CD8-positive, alpha-beta T cell (primary cell): ENCODE measurements at regions of chr1 and their contacts with region 1.

Region 1: DNA sequence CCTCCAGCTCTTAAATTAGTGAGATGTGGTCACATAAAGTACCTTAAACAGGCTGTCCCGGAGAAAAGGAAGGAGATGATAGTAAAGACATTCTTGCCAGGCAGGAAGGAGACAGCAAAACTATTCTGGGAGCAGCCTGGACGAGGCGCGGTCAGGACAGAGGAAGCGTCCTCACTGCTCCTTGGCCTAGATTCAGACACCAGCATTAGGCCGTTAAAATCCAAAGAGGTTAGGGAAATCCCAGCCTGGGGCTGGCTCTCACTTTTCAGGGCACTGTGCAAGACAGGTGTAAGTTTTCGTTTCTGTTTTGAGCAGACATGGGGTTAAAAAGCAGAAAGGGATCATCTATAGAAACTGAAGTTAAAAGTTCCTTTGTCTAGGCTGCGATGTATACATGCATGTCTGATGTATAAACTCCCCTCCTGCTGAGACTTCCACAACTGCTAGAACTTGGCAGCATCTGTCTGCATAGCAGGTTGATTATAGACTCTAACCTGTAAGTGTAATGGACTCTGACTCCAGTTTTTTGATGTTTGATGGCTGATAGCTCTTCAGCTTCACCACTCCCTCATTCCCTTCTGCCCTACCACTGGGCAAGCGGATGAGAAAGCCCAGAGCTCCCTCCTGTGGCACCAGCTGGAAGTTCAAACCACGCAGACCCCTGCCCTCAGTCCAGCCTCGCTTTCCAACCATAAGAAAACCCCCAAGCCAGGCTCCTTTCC is 21.5 kb downstream of the STPG1 start:
- DNase-seq: peak in 7 of 9 experiments; percentile 32 to 78 (median 65)
- ATAC-seq: peak; percentile 68
- H3K4me3 ChIP-seq: peak overlapping the region in 1 of 2 experiments; percentile 19
- H3K4me3 Mint-ChIP-seq: peak overlapping the region; percentile 78
- H3K27ac ChIP-seq: peak overlapping the region in 1 of 2 experiments; percentile 88
- H3K27ac Mint-ChIP-seq: peak overlapping the region; percentile 94
- H3K4me1 ChIP-seq: peaks cover 34% of the 10 kb centered on the region
- H3K4me1 Mint-ChIP-seq: peaks cover 31% of the 10 kb centered on the region
- H3K27me3 ChIP-seq: no peaks in the 10 kb centered on the region
- H3K27me3 Mint-ChIP-seq: no peaks in the 10 kb centered on the region
- CTCF ChIP-seq: peak; percentile 60

Region 2: GRCh38 chr1:24186993-24187805 is 204.8 kb before region 1 on chr1 and contains the start of gene IFNLR1:
- CTCF ChIA-PET with region 1: interaction called, 60 read pairs
- POLR2A ChIA-PET with region 1: interaction called, 6 read pairs
- intact Hi-C with region 1: no loop called
- DNase-seq: peak; percentile 22 to 91 (median 73)
- ATAC-seq: peak; percentile 85
- H3K4me3 ChIP-seq: peak within 1 kb of the TSS; percentile 51 to 81
- H3K4me3 Mint-ChIP-seq: peak within 1 kb of the TSS; percentile 85
- H3K27ac ChIP-seq: peak within 1 kb of the TSS; percentile 32 to 56
- H3K27ac Mint-ChIP-seq: peak within 1 kb of the TSS; percentile 80
- H3K4me1 ChIP-seq: peaks cover 29% of the 10 kb centered on the region
- H3K4me1 Mint-ChIP-seq: peaks cover 56% of the 10 kb centered on the region
- H3K27me3 ChIP-seq: no peaks in the 10 kb centered on the region
- H3K27me3 Mint-ChIP-seq: no peaks in the 10 kb centered on the region
- CTCF ChIP-seq: no peak
- total RNA-seq, gene IFNLR1: 4.1 to 5.6 TPM

Region 3: GRCh38 chr1:24321697-24322469 is 70.2 kb before region 1 on chr1:
- CTCF ChIA-PET with region 1: interaction called, 5 read pairs
- POLR2A ChIA-PET with region 1: no interaction called
- intact Hi-C with region 1: loop called in 1 of 2 experiments (anchors 5 kb)
- DNase-seq: peak; percentile 32 to 86 (median 64)
- ATAC-seq: peak; percentile 70
- H3K4me3 ChIP-seq: peak overlapping the region; percentile 34 to 48
- H3K4me3 Mint-ChIP-seq: peak overlapping the region; percentile 78
- H3K27ac ChIP-seq: no peak overlapping the region
- H3K27ac Mint-ChIP-seq: no peak overlapping the region
- H3K4me1 ChIP-seq: peaks cover 47% of the 10 kb centered on the region
- H3K4me1 Mint-ChIP-seq: peaks cover 46% of the 10 kb centered on the region
- H3K27me3 ChIP-seq: peaks cover 8 to 12% of the 10 kb centered on the region in 2 experiments
- H3K27me3 Mint-ChIP-seq: peaks cover 36% of the 10 kb centered on the region
- CTCF ChIP-seq: no peak

Region 4: DNA sequence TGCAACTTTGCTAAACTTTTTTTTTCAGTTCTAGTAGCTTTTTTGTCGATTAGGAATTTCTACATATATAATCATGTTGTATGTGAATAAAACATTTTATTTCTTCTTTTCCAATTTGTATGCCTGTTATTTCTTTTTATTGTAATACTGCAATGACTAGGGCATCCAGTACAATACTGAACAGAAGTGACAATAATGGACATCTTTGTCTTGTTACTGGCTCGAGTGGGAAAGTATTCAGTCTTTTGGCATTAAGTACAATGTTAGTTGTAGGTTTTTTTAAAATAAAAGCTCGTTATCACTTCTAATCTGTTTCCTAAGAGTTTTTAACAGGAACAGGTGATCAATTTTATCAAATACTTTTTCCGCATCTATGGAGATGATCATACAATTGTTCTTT is 11.8 kb after region 1 on chr1:
- CTCF ChIA-PET with region 1: interaction called, 43 read pairs
- POLR2A ChIA-PET with region 1: interaction called, 4 read pairs
- intact Hi-C with region 1: no loop called
- DNase-seq: no peak
- ATAC-seq: no peak
- H3K4me3 ChIP-seq: no peak overlapping the region
- H3K4me3 Mint-ChIP-seq: no peak overlapping the region
- H3K27ac ChIP-seq: no peak overlapping the region
- H3K27ac Mint-ChIP-seq: no peak overlapping the region
- H3K4me1 ChIP-seq: no peaks in the 10 kb centered on the region
- H3K4me1 Mint-ChIP-seq: no peaks in the 10 kb centered on the region
- H3K27me3 ChIP-seq: no peaks in the 10 kb centered on the region
- H3K27me3 Mint-ChIP-seq: no peaks in the 10 kb centered on the region
- CTCF ChIP-seq: no peak

Region 5: GRCh38 chr1:24586970-24587820 is 195.2 kb after region 1 on chr1:
- CTCF ChIA-PET with region 1: interaction called, 86 read pairs
- POLR2A ChIA-PET with region 1: interaction called, 4 read pairs
- intact Hi-C with region 1: loop called (anchors 1 to 2 kb)
- DNase-seq: peak in 8 of 9 experiments; percentile 10 to 88 (median 58)
- ATAC-seq: peak; percentile 99
- H3K4me3 ChIP-seq: no peak overlapping the region
- H3K4me3 Mint-ChIP-seq: peak overlapping the region; percentile 11
- H3K27ac ChIP-seq: peak overlapping the region; percentile 27 to 30
- H3K27ac Mint-ChIP-seq: peak overlapping the region; percentile 92
- H3K4me1 ChIP-seq: peaks cover 5% of the 10 kb centered on the region
- H3K4me1 Mint-ChIP-seq: peaks cover 6% of the 10 kb centered on the region
- H3K27me3 ChIP-seq: no peaks in the 10 kb centered on the region
- H3K27me3 Mint-ChIP-seq: no peaks in the 10 kb centered on the region
- CTCF ChIP-seq: peak; percentile 92